PC-3 (cell line): ENCODE measurements at regions of chr20 and their contacts with region 1.

Region 1: DNA sequence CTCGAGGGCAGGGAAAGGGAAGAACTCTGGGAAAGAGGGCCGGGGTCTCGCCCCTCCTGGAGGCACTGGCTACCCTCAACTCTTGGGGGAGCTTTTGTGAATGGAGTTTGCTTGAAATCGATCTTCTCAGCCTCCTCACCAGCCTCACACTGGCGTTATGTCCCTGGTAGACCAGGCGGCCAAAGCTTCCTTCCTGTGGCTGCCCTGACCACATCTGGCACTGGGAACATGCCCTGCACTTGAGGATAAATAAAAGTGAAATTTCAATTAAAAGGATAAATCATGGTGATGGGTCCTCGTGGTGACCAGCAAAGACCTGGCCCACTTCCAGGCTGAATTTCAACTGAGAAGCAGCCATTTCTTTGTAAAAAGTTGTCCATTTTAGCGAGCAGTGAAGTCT is 234.7 kb downstream of the TAF4 start:
- DNase-seq: no peak
- ATAC-seq: no peak
- H3K4me3 ChIP-seq: no peak overlapping the region
- H3K27ac ChIP-seq: no peak overlapping the region
- H3K4me1 ChIP-seq: no peaks in the 10 kb centered on the region
- H3K27me3 ChIP-seq: peaks cover 99% of the 10 kb centered on the region
- CTCF ChIP-seq: no peak

Region 2: GRCh38 chr20:61263084-61263695 is 567.8 kb before region 1 on chr20:
- CTCF ChIA-PET with region 1: interaction called, 17 read pairs
- POLR2A ChIA-PET with region 1: no interaction called
- intact Hi-C with region 1: no loop called
- DNase-seq: peak; percentile 15
- ATAC-seq: no peak
- H3K4me3 ChIP-seq: no peak overlapping the region
- H3K27ac ChIP-seq: no peak overlapping the region
- H3K4me1 ChIP-seq: no peaks in the 10 kb centered on the region
- H3K27me3 ChIP-seq: peaks cover 29% of the 10 kb centered on the region
- CTCF ChIP-seq: peak; percentile 79